Adrenal gland (tissue), 19 donors: ENCODE measurements at regions of chr1 and their contacts with region 1.

Region 1: GRCh38 chr1:168567007-168567406 is 9.4 kb upstream of the XCL1 start:
- DNase-seq: no peak
- H3K4me3 ChIP-seq: no peak overlapping the region
- H3K27ac ChIP-seq: no peak overlapping the region
- H3K4me1 ChIP-seq: no peaks in the 10 kb centered on the region
- H3K27me3 ChIP-seq: no peaks in the 10 kb centered on the region
- CTCF ChIP-seq: no peak
- POLR2A ChIP-seq: no peak

Region 2: DNA sequence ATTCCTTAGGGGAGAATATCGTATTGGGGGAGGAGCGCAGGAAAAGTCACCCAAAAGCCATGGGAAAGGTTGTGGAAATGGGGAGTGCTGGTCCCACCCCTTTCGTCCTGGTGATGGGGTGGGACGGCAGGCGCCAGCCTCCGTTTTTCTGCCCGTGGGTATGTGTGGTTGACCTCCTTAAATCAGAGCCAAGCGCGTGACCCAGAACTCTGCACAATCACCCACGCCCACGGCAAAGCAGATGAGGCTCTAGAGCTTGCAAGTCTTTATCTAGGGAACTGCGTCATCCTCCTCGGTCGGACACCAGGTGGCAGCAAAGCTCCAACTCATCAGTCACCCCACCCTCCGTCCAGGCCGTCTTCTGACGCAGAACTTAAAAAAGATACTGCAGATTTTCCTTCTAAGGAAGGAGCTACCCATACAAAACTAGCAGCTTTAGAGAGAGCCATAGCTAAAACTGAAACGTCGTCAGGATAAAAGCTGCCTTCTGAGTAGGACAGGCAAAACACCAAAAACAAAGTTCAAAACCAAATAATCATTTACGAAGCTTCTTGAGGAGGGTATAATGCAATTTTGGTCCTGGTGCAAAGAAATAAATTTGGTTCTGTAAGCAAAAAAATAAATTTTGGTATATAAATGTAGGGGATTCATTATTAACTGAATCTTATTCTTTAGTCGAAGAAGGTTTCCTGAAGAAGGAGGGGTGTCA is 224.3 kb before region 1 on chr1:
- intact Hi-C with region 1: loop called in 1 of 2 experiments (anchors 10 kb)
- DNase-seq: peak; percentile 83 to 97 (median 89)
- H3K4me3 ChIP-seq: peak overlapping the region in 1 of 4 donors; percentile 44
- H3K27ac ChIP-seq: no peak overlapping the region
- H3K4me1 ChIP-seq: peaks cover 5 to 9% of the 10 kb centered on the region in 2 donors
- H3K27me3 ChIP-seq: no peaks in the 10 kb centered on the region
- CTCF ChIP-seq: peak; percentile 52 to 89 (median 82)
- POLR2A ChIP-seq: no peak

Region 3: GRCh38 chr1:168504064-168504837 is 62.8 kb before region 1 on chr1:
- intact Hi-C with region 1: no loop called
- DNase-seq: peak; percentile 40 to 83 (median 78)
- H3K4me3 ChIP-seq: no peak overlapping the region
- H3K27ac ChIP-seq: peak overlapping the region in 1 of 5 donors; percentile 63
- H3K4me1 ChIP-seq: peaks cover 4 to 8% of the 10 kb centered on the region in 2 donors
- H3K27me3 ChIP-seq: no peaks in the 10 kb centered on the region
- CTCF ChIP-seq: no peak
- POLR2A ChIP-seq: no peak